Pancreas (tissue), 10 donors: ENCODE measurements at regions of chr9 and their contacts with region 1.

Region 1: GRCh38 chr9:137021979-137022619 is 5.9 kb downstream of the ABCA2 start:
- DNase-seq: no peak
- ATAC-seq: peak in 3 of 4 donors; percentile 16 to 38 (median 26)
- H3K4me3 ChIP-seq: no peak overlapping the region
- H3K27ac ChIP-seq: no peak overlapping the region
- H3K4me1 ChIP-seq: peaks cover 7 to 12% (median 7%) of the 10 kb centered on the region in 3 donors
- H3K27me3 ChIP-seq: no peaks in the 10 kb centered on the region
- CTCF ChIP-seq: no peak

Region 2: DNA sequence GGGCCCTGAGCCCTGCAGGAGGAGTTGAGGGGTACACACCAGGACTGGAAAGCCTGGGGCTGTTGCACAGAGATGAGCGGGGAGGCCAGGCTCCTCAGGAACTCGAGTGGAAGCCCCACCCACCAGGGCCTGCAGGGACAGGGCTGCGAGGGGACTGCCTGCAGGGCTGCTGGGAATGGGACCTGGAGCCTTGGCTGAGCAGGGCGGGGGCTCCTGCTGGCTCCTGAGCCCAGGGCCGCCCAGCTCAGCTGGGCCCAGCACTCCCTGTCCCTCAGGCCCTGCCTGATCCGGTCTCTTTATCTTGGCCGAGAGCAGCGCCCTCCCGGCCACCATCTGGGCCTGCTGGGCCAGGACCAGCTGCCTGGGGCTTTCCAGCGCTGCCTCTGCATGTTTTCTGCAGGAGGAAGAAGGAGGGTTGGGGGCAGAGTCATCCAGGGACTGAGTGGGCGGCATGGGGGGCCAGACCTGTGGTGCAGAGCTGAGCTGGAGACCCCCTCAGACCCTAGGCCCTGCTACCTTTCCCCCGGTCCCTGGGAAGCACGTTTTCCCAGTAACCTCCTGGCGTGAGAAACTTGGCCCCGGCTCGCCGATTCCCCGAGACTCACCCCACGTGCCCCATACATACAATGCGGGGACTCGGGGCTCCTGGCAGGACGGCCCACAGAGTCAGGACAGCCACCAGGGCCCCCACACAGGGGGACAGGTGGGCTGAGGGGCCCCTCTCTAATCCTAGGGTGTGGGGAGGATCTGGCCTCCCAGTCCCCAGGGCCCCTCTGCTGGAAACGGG is 60.6 kb before region 1 on chr9:
- intact Hi-C with region 1: loop called in 2 of 3 experiments (anchors 5 to 10 kb)
- DNase-seq: no peak
- ATAC-seq: peak in 3 of 4 donors; percentile 18 to 28 (median 20)
- H3K4me3 ChIP-seq: no peak overlapping the region
- H3K27ac ChIP-seq: no peak overlapping the region
- H3K4me1 ChIP-seq: peaks cover 0 to 5% (median 4%) of the 10 kb centered on the region in 3 donors
- H3K27me3 ChIP-seq: no peaks in the 10 kb centered on the region
- CTCF ChIP-seq: no peak

Region 3: GRCh38 chr9:137200311-137201204 is 178.5 kb after region 1 on chr9 and contains the start of gene TPRN:
- intact Hi-C with region 1: no loop called
- DNase-seq: peak; percentile 98 to 100 (median 100)
- ATAC-seq: peak; percentile 75 to 89 (median 80)
- H3K4me3 ChIP-seq: peak within 1 kb of the TSS; percentile 48 to 80 (median 60)
- H3K27ac ChIP-seq: peak within 1 kb of the TSS; percentile 83 to 90 (median 85)
- H3K4me1 ChIP-seq: peaks cover 12 to 33% (median 15%) of the 10 kb centered on the region in 3 donors
- H3K27me3 ChIP-seq: no peaks in the 10 kb centered on the region
- CTCF ChIP-seq: no peak
- total RNA-seq, gene TPRN: 50.3 to 110 (median 74.8) TPM